Activated CD4-positive, alpha-beta T cell treated with anti-CD3 and anti-CD28 coated beads for 36 hours (primary cell): ENCODE measurements at regions of chr16 and their contacts with region 1.

Region 1: DNA sequence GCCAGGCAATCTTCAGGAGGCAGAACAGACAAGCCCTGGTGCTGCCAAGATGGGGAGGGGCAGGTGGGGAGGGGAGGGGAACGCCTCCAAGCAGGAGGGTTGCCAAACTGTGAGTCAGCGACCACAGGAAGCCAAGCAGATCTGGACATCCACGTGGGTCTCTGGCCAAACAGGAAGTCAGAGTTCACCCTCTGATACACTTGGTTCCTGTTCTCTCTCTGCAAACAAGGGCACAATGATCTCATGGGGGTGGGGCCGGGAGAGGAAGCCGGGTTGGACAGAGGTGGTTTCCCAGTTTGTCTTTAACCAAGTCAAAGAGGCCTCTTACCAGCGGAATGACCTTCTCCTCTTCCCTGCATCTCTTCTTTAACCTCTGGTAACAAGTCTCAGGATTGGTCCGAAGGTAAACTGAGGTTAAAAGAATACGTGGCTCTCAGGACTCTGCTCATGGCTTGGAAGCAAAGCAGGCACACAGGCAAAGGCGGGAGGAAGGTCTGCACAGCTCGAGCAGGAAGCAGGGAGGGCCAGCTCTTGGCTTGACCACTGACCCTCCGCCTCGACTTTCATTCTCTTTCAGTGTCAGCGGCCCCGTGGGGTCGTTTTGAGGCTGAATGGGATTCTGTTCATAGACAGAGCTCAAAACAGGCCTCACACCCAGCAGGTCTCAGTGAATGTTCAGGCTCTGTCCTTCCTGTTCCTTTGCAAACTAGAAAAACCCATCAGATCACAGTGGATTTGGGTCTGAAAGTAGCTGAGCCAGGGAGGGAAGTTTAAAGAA is 32.9 kb downstream of the TK2 start:
- DNase-seq: peak; percentile 91
- ATAC-seq: peak; percentile 90
- H3K4me3 Mint-ChIP-seq: peak overlapping the region; percentile 65
- H3K27ac Mint-ChIP-seq: peak overlapping the region; percentile 92
- H3K4me1 Mint-ChIP-seq: peaks cover 66% of the 10 kb centered on the region
- H3K27me3 Mint-ChIP-seq: no peaks in the 10 kb centered on the region

Region 2: DNA sequence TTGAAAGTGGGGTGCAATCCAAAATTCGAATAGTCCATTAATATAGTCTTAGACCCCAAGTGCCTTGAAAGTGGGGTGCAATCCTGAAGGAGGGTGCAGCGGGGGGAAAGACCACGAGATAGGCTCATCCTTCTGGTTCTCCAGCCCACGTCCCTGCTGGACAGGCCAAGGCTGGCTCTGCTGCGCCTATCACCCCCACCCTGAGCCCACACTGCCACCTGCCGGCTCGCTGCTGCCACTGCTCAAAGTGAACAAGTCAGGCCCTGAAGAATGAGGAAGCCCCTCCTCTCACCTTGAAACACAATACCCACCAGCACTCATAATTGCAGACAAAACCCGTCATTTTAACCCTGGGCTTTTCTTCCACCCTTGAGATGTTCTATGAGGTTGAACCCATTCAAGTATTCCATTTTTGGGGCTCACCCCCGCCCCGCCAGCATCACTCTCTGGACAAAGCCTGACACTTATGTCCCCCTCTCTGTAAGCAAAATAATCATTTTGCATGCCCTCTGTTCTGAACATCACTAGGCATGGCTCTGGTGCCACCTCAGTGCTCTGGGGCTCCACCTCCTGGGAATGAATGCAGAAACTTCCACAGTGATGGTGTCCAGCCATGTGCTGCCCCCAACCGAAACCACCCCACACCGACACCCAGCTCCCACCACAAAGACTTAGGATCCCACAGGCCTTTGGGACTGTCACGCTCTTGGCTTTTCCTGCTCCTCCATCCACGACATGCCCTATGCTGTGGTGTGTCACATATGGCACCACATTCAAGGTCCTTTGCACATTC is 33.1 kb before region 1 on chr16:
- CTCF ChIA-PET with region 1: interaction called, 4 read pairs
- POLR2A ChIA-PET with region 1: no interaction called
- intact Hi-C with region 1: loop called (anchors 2 to 5 kb)
- DNase-seq: peak; percentile 89
- ATAC-seq: peak; percentile 77
- H3K4me3 Mint-ChIP-seq: no peak overlapping the region
- H3K27ac Mint-ChIP-seq: peak overlapping the region; percentile 55
- H3K4me1 Mint-ChIP-seq: peaks cover 18% of the 10 kb centered on the region
- H3K27me3 Mint-ChIP-seq: no peaks in the 10 kb centered on the region

Region 3: GRCh38 chr16:66552286-66553177 is 35.5 kb after region 1 on chr16 and contains the start of gene CKLF:
- CTCF ChIA-PET with region 1: interaction called, 59 read pairs
- POLR2A ChIA-PET with region 1: interaction called, 15 read pairs
- intact Hi-C with region 1: loop called (anchors 1 kb)
- DNase-seq: peak; percentile 94
- ATAC-seq: peak; percentile 73
- H3K4me3 Mint-ChIP-seq: peak within 1 kb of the TSS; percentile 97
- H3K27ac Mint-ChIP-seq: peak within 1 kb of the TSS; percentile 94
- H3K4me1 Mint-ChIP-seq: peaks cover 76% of the 10 kb centered on the region
- H3K27me3 Mint-ChIP-seq: no peaks in the 10 kb centered on the region
- total RNA-seq, gene CKLF: 93.5 to 122 TPM

Region 4: GRCh38 chr16:66562407-66562806 is 45.4 kb after region 1 on chr16:
- CTCF ChIA-PET with region 1: interaction called, 22 read pairs
- POLR2A ChIA-PET with region 1: interaction called, 15 read pairs
- intact Hi-C with region 1: loop called (anchors 1 kb)
- DNase-seq: no peak
- ATAC-seq: no peak
- H3K4me3 Mint-ChIP-seq: no peak overlapping the region
- H3K27ac Mint-ChIP-seq: no peak overlapping the region
- H3K4me1 Mint-ChIP-seq: peaks cover 65% of the 10 kb centered on the region
- H3K27me3 Mint-ChIP-seq: no peaks in the 10 kb centered on the region

Region 5: DNA sequence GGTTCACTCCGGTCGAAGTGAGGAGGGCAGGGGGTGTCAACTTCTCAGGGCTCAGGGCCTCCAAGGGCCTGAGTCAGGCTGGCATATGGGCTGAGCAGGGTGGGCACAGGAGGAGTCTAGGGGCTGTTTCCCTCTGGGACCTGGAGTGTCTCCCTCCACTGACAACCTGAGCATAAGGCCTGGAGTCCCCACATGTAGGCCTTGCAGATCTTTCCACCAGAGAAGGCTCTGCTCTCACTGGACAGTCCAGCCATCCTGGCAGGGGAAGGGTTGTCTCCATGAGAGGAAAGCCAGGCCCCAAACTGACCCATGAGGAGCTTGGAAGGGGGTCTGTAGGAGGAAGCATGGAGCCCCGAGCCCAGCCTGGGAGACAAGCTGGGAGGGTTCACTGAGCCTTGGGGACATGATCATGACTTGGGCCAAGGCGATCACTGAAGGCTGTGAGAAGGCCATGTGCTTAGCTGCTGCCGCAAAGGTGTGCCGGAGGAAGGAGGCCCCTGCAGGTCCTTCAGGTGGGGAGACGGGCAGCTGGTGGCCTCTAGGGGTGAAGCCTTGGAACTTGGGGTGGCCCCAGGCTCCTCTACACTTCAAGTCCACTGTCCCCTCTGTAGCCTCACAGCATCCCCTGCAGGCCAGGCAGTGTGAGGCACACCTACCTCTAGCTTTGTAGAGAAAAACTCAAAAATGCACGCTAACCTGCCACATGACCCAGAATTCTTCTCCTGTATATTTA is 72.2 kb after region 1 on chr16:
- CTCF ChIA-PET with region 1: interaction called, 5 read pairs
- POLR2A ChIA-PET with region 1: no interaction called
- intact Hi-C with region 1: loop called (anchors 1 to 5 kb)
- DNase-seq: peak; percentile 86
- ATAC-seq: peak; percentile 99
- H3K4me3 Mint-ChIP-seq: peak overlapping the region; percentile 63
- H3K27ac Mint-ChIP-seq: peak overlapping the region; percentile 65
- H3K4me1 Mint-ChIP-seq: peaks cover 35% of the 10 kb centered on the region
- H3K27me3 Mint-ChIP-seq: no peaks in the 10 kb centered on the region